Posterior vena cava (tissue), 2 donors: ENCODE measurements at regions of chr7 and their contacts with region 1.

Region 1: GRCh38 chr7:133904776-133905175 is 222.4 kb upstream of the LRGUK start:
- DNase-seq: no peak

Region 2: DNA sequence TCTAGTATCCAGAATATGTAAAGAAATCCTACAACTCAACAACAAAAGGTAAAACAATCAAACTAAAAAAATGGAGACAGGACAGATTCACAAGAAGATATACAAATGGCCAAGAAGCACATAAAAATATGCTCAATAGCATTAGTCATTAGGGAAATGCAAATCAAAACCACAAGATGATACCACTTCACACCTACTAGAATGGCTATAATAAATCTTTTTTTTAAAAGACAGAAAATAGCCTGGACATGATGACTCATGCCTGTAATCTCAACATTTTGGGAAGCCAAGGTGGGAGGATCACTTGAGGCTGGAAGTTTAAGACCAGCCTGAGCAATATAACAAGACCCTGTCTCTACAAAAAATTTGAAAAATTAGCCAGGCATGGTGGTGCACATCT is 795.0 kb before region 1 on chr7:
- intact Hi-C with region 1: loop called in 1 of 2 experiments (anchors 10 kb)
- DNase-seq: no peak

Region 3: GRCh38 chr7:133575726-133576440 is 328.9 kb before region 1 on chr7:
- intact Hi-C with region 1: no loop called
- DNase-seq: no peak

Region 4: GRCh38 chr7:133873631-133874030 is 31.1 kb before region 1 on chr7:
- intact Hi-C with region 1: no loop called
- DNase-seq: no peak

Region 5: DNA sequence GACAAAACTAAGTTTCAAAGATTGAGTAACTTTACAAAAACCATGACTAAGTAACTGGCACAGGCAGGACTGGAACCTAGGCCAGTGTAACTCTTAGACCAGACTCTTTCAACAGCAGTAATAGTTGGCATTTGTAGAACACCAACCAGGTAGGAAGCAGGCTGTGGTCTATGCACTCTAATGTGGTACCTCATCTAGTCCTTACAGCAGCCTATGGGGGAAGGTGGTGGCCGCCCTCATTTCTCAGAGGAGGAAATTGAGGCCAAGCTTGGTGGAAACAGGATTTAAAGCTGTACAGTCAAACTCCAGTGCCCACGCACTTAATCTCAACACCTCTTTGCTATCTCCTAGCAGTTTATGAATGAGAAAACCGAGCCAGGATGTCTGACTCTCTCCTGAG is 56.9 kb after region 1 on chr7:
- intact Hi-C with region 1: no loop called
- DNase-seq: no peak